HAP-1 (cell line): ENCODE measurements at regions of chrX and their contacts with region 1.

Region 1: DNA sequence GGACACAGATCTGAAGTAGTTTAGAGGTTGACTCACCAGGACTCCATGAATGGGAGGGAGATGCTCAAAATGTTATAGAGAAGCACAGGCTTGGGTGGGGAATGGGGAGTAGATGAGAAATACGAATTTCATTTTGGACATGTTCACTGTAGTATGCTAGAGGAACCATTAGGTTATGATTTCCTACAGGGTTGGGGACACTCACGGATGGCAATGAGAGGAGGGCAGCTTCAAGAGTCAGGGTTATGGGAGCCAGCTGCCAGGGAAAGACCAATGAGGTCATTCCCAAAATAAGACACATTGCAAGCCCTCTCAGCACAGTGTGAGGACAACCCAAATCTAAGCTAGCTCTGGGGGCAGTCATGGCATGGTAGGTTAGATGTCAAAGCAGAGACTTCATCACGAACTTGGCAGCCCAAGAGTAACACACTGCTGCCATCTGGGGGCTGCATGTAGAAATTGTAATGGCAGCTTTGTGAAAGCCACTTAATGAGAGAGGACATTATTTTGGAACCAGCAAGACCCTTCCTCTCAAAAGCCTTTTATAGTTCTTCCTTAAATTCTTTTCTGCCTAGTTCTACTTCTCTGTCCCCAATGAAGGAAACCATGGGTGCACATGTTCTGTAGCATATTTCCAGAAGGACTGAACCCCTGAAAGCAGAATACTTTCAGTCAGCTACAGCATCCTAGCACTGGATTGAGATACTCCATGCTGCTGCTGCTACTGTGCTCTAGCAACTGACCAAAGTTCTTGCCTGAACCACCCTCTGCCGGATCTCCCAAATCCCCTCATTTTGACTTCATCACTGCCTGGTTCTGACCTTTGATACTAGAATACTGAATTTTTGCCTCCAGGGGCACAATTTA is 16.2 kb upstream of the ZCCHC12 start:
- DNase-seq: peak; percentile 36 to 71
- H3K4me3 ChIP-seq: no peak overlapping the region
- H3K4me1 ChIP-seq: no peaks in the 10 kb centered on the region
- H3K27me3 ChIP-seq: no peaks in the 10 kb centered on the region

Region 2: DNA sequence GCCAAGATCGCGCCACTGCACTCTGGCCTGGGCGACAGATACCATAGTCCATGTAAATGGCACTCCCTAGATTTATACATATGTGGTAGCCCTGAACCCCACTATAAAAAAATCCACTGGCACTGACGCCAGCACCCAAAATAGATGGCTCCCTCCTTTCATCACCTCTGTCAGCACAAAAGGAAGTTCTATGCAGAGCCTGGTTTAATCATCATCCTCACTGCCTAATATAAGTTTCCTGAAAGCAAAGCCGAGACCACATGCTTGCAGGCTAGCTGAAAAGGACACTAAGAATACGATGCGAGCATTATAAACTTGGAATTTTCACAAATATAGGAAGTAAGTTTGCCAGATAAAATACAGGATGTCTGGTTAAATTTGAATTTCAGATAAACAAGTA is 339.3 kb before region 1 on chrX:
- in situ Hi-C with region 1: loop called (anchors 10 kb)
- DNase-seq: no peak
- H3K4me3 ChIP-seq: no peak overlapping the region
- H3K4me1 ChIP-seq: no peaks in the 10 kb centered on the region
- H3K27me3 ChIP-seq: no peaks in the 10 kb centered on the region

Region 3: GRCh38 chrX:118603981-118604380 is 203.4 kb before region 1 on chrX:
- in situ Hi-C with region 1: loop called (anchors 10 kb)
- DNase-seq: peak; percentile 76 to 78
- H3K4me3 ChIP-seq: no peak overlapping the region
- H3K4me1 ChIP-seq: no peaks in the 10 kb centered on the region
- H3K27me3 ChIP-seq: no peaks in the 10 kb centered on the region

Region 4: DNA sequence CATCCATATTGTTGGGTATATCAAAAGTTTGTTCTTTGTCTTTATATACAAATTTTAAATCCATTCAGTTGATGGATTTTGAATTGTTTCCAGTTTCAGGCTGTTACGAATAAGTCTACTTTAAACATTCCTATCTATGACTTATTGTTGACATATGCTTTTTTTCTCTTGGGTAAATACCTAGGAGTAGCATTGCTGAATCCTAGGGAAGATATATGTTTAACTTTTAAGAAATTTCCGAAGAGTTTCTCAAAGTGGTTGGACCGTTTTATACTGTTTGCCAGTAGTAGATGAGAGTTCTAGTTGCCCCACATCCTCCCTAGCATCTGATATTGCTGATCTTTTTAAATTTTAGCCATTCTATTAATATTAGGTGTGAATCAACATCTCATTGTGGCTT is 140.8 kb before region 1 on chrX:
- in situ Hi-C with region 1: no loop called
- DNase-seq: no peak
- H3K4me3 ChIP-seq: no peak overlapping the region
- H3K4me1 ChIP-seq: peaks cover 12% of the 10 kb centered on the region
- H3K27me3 ChIP-seq: no peaks in the 10 kb centered on the region